GM12878 (cell line): ENCODE measurements at regions of chr10 and their contacts with region 1.

Region 1: DNA sequence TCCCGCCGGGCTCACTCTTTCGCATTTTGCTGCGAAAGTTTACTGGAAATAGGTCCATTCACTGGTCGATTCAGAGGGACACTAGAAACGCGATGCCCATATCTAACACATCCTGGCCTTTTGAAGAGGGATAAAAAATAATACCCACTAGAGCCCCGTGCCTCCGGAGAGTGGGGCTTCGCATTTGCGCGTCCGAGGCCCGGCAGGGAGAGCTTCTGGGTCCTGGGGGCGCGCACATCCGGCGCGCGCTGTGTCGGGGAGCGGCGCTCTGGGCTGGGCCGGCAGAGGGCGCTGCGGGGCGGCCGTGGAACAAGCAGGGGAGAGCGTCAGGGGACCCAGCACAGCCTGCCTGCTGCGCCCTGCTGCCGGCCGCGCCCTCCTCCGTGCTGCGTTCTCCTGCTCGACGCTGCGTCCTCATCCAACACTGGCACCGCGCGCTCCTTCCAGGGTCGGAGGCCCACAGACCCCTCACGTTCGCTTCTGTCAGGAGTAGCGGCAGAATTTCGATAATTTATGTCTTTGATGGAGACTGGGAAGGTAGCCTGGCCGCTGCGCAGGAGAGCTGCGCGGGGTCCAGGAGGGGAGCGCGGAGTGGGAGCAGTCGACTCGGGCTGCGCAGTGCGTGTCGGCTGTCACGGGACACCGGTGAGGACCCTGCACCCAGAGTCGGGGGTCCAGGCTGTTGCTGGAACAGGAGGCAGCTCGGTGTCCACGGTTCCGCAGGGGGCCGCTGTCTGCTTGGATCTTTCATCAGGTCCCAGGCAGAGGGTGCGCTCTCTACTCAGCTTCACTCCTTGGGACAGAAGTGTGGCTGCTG is 41.5 kb upstream of the ZNF32 start:
- DNase-seq: no peak
- ATAC-seq: peak; percentile 100
- H3K4me3 ChIP-seq: peak overlapping the region; percentile 69; the same call in 1 of the 2 replicates
- H3K27ac ChIP-seq: no peak overlapping the region
- H3K4me1 ChIP-seq: peaks cover 3% of the 10 kb centered on the region; the same call in 1 of the 2 replicates
- H3K27me3 ChIP-seq: no peaks in the 10 kb centered on the region; a peak in 1 of 4 replicates
- CTCF ChIP-seq: peak; percentile 73 to 79 (median 74)
- EP300 ChIP-seq: no peak
- POLR2A ChIP-seq: no peak
- RAD21 ChIP-seq: peak; percentile 72

Region 2: DNA sequence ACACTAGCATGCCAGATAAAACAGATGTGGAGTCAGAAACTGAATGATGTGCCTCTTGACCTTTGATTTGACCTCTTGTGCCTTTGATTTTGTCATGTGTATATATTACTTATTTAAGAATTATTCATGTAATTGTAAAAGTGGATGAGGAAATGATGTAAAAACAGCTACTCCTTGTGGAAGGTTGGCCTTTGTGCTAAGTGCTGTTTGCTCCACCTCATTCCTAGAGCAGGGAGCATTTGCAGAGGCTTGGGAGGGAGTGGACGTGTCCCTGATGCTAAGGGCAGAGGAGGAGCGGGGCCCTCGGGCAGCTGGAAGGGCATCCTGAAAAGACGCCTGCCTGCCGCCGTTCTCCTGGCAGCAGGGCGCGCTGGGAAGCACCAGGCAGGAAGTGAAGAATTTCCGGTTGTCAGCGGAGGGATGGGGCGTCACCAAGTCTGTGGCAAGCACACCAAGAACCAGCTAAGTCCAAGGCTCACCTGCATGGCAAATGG is 156.1 kb after region 1 on chr10:
- CTCF ChIA-PET with region 1: no interaction called
- POLR2A ChIA-PET with region 1: no interaction called
- RAD21 ChIA-PET with region 1: no interaction called
- SMC1A ChIA-PET with region 1: no interaction called
- in situ Hi-C with region 1: no loop called
- intact Hi-C with region 1: loop called (anchors 10 kb)
- DNase-seq: peak; percentile 4
- ATAC-seq: no peak
- H3K4me3 ChIP-seq: no peak overlapping the region
- H3K27ac ChIP-seq: no peak overlapping the region
- H3K4me1 ChIP-seq: no peaks in the 10 kb centered on the region; the same call in 1 of the 2 replicates
- H3K27me3 ChIP-seq: no peaks in the 10 kb centered on the region
- CTCF ChIP-seq: no peak
- EP300 ChIP-seq: no peak
- POLR2A ChIP-seq: no peak
- RAD21 ChIP-seq: no peak

Region 3: GRCh38 chr10:44030143-44030542 is 340.0 kb after region 1 on chr10:
- CTCF ChIA-PET with region 1: interaction called, 30 read pairs
- POLR2A ChIA-PET with region 1: no interaction called
- RAD21 ChIA-PET with region 1: interaction called, 27 read pairs
- SMC1A ChIA-PET with region 1: interaction called, 8 read pairs
- in situ Hi-C with region 1: no loop called
- intact Hi-C with region 1: loop called (anchors 5 kb)
- DNase-seq: no peak
- ATAC-seq: peak; percentile 90
- H3K4me3 ChIP-seq: no peak overlapping the region
- H3K27ac ChIP-seq: no peak overlapping the region
- H3K4me1 ChIP-seq: no peaks in the 10 kb centered on the region
- H3K27me3 ChIP-seq: no peaks in the 10 kb centered on the region
- CTCF ChIP-seq: peak; percentile 65 to 78 (median 71); a peak in 5 of 6 replicates
- EP300 ChIP-seq: no peak
- POLR2A ChIP-seq: no peak
- RAD21 ChIP-seq: peak; percentile 98

Region 4: GRCh38 chr10:44046605-44047004 is 356.4 kb after region 1 on chr10:
- CTCF ChIA-PET with region 1: interaction called, 3 read pairs
- POLR2A ChIA-PET with region 1: no interaction called
- RAD21 ChIA-PET with region 1: no interaction called
- SMC1A ChIA-PET with region 1: no interaction called
- in situ Hi-C with region 1: loop called (anchors 5 kb)
- intact Hi-C with region 1: no loop called
- DNase-seq: no peak
- ATAC-seq: no peak
- H3K4me3 ChIP-seq: no peak overlapping the region
- H3K27ac ChIP-seq: no peak overlapping the region
- H3K4me1 ChIP-seq: no peaks in the 10 kb centered on the region
- H3K27me3 ChIP-seq: no peaks in the 10 kb centered on the region; a peak in 1 of 4 replicates
- CTCF ChIP-seq: no peak; a peak in 1 of 6 replicates
- EP300 ChIP-seq: no peak
- POLR2A ChIP-seq: no peak
- RAD21 ChIP-seq: no peak